ENCODE measurements at regions of chr2 and their contacts with region 1.

Region 1: DNA sequence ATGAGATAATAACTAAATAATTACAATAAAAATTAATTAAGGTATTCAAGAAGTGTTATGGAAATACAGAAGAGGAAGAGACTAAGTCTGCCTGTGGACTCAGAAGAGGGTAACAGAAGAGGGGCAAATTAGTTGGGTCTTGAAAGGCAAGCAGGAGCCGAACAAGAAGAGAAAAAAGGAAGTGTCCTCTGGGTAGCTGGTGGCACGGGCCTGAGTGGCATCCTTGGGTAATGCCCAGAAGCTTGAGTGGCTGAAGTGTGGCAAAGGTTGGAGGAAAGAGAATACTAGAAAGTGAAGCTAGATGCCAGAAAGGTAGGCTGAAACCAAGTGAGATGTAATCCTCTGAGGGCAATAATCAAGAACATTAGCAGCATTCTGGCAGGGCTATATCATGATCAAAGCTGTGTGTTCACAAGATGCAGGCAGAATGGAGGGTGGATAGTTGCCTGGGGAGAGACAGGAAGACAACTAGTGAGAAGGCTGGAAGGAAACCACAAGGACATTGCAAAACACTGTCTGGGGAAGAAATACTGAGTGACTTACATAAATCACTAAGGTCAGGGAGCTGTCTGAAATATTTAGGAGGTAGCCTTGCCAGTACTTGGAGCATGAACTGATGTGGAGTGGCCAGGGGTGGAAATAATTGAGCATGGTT is 16.2 kb downstream of the DOCK10 start:
- DNase-seq: peak in 1 of 2 experiments; percentile 38
- H3K4me3 ChIP-seq: no peak overlapping the region
- H3K27ac ChIP-seq: no peak overlapping the region
- H3K4me1 ChIP-seq: peaks cover 11% of the 10 kb centered on the region
- H3K27me3 ChIP-seq: no peaks in the 10 kb centered on the region
- CTCF ChIP-seq: no peak

Region 2: DNA sequence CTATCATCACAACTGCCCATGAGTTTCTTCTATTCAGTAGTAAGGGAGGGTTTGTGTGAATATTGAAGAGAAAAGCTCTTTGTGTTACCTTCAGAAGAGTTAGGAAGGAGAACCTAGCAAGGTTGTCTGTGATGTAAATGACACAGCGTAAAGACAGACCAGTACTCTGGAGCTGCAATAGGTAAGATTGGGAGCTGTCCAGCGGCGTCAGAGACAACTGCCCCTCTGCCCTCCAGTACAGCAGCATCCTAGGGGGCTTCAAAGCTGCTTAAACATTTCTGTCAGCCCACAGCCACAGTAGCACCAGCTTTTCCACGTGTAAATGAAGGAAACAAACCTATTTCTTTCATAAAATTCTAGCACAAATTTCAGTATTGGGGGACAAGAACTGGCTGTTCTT is 408.0 kb after region 1 on chr2:
- CTCF ChIA-PET with region 1: no interaction called
- POLR2A ChIA-PET with region 1: interaction called, 25 read pairs
- intact Hi-C with region 1: no loop called
- DNase-seq: no peak
- H3K4me3 ChIP-seq: no peak overlapping the region
- H3K27ac ChIP-seq: no peak overlapping the region
- H3K4me1 ChIP-seq: no peaks in the 10 kb centered on the region
- H3K27me3 ChIP-seq: no peaks in the 10 kb centered on the region
- CTCF ChIP-seq: no peak

Measured in PC-9 (cell line).